ENCODE measurements at regions of chr20 and their contacts with region 1.

Region 1: GRCh38 chr20:37243076-37243936 is 18.3 kb downstream of the GHRH start:
- DNase-seq: no peak
- H3K4me3 ChIP-seq: no peak overlapping the region
- H3K27ac ChIP-seq: peak overlapping the region; percentile 32 to 72 (median 55)
- H3K4me1 ChIP-seq: peaks cover 19 to 61% (median 52%) of the 10 kb centered on the region in 4 donors
- H3K27me3 ChIP-seq: no peaks in the 10 kb centered on the region
- CTCF ChIP-seq: no peak
- EP300 ChIP-seq: no peak
- POLR2A ChIP-seq: no peak

Region 2: DNA sequence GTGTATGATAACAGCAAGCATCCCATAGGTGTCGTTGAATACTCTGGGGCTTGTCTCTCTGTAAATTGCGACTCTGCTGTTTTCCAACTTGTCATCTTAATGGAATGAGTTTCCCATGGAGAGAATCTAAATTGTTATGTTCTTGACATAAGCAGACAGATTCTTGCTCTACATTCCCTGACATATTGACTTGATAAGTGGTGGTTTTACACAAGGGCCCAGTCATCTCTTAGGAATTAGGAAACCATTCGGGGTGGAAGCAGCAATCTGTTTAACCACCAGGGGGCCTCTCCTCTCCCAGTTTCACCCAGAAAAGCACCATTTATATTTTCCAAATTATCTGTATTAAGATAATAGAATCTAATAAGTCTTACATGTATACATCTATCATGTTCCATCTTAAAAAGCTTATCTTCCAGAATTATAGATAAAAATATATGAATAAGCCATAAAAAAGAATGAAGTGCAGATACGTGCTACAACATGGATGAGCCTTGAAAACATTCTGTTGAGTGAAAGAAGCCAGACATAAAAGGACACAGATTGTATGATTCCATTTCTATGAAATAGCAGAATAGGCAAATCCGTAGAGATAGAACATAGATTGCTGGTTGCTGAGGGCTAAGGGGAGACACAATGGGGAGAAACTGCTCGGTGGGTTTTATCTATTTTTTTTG is 40.9 kb before region 1 on chr20:
- intact Hi-C with region 1: loop called (anchors 5 kb)
- DNase-seq: no peak
- H3K4me3 ChIP-seq: peak overlapping the region in 2 of 4 donors; percentile 12 to 21
- H3K27ac ChIP-seq: peak overlapping the region; percentile 64 to 81 (median 76)
- H3K4me1 ChIP-seq: peaks cover 13 to 47% (median 30%) of the 10 kb centered on the region in 4 donors
- H3K27me3 ChIP-seq: no peaks in the 10 kb centered on the region
- CTCF ChIP-seq: peak; percentile 83 to 87 (median 84)
- EP300 ChIP-seq: no peak
- POLR2A ChIP-seq: no peak

Measured in esophagus muscularis mucosa (tissue), 4 donors.